B cell (primary cell): ENCODE measurements at regions of chr6 and their contacts with region 1.

Region 1: DNA sequence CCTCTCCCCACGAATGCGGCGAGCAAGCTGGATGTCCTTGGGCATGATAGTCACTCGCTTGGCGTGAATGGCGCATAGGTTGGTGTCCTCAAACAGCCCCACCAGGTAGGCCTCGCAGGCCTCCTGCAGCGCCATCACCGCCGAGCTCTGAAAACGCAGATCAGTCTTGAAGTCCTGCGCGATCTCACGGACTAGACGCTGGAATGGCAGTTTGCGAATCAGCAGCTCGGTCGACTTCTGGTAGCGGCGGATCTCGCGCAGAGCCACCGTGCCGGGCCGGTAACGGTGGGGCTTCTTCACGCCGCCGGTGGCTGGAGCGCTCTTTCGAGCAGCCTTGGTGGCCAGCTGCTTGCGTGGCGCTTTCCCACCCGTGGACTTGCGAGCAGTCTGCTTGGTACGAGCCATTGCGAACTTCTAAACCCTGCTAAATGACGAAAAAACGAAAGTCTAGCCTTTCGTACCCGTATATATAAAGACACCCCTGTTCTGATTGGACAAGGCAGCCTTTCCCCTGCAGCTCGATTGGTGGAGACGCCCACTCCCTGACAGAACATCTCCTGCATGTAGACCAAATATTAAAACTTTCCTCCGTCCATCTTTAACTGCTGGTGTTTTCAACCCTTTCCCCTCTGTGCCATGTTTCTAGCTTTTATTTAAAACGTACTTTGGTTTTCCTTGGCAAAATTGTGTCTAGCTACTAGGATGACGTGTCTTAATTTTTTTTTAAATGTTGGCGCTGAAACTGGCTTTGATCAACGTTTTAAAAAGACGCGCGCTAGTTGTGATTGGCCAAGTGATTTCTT is 109.8 kb downstream of the HFE start:
- DNase-seq: peak; percentile 95
- ATAC-seq: peak; percentile 55
- H3K4me3 ChIP-seq: peak overlapping the region; percentile 78 to 100 (median 90)
- H3K4me3 Mint-ChIP-seq: peak overlapping the region; percentile 91
- H3K27ac ChIP-seq: peak overlapping the region; percentile 78 to 95
- H3K27ac Mint-ChIP-seq: peak overlapping the region; percentile 96
- H3K4me1 ChIP-seq: peaks cover 16 to 31% of the 10 kb centered on the region in 2 donors
- H3K4me1 Mint-ChIP-seq: peaks cover 41% of the 10 kb centered on the region
- H3K27me3 ChIP-seq: no peaks in the 10 kb centered on the region
- H3K27me3 Mint-ChIP-seq: no peaks in the 10 kb centered on the region
- CTCF ChIP-seq: no peak

Region 2: GRCh38 chr6:25962149-25963127 is 234.6 kb before region 1 on chr6 and contains the start of gene TRIM38:
- CTCF ChIA-PET with region 1: no interaction called
- POLR2A ChIA-PET with region 1: no interaction called
- intact Hi-C with region 1: no loop called
- DNase-seq: peak; percentile 95
- ATAC-seq: peak; percentile 84
- H3K4me3 ChIP-seq: peak within 1 kb of the TSS; percentile 83 to 95 (median 92)
- H3K4me3 Mint-ChIP-seq: peak within 1 kb of the TSS; percentile 97
- H3K27ac ChIP-seq: peak within 1 kb of the TSS; percentile 94 to 97
- H3K27ac Mint-ChIP-seq: peak within 1 kb of the TSS; percentile 98
- H3K4me1 ChIP-seq: peaks cover 74 to 75% of the 10 kb centered on the region in 2 donors
- H3K4me1 Mint-ChIP-seq: peaks cover 78% of the 10 kb centered on the region
- H3K27me3 ChIP-seq: no peaks in the 10 kb centered on the region
- H3K27me3 Mint-ChIP-seq: no peaks in the 10 kb centered on the region
- CTCF ChIP-seq: no peak
- total RNA-seq, gene TRIM38: 57.2 and 57.5 TPM in 2 replicates

Region 3: DNA sequence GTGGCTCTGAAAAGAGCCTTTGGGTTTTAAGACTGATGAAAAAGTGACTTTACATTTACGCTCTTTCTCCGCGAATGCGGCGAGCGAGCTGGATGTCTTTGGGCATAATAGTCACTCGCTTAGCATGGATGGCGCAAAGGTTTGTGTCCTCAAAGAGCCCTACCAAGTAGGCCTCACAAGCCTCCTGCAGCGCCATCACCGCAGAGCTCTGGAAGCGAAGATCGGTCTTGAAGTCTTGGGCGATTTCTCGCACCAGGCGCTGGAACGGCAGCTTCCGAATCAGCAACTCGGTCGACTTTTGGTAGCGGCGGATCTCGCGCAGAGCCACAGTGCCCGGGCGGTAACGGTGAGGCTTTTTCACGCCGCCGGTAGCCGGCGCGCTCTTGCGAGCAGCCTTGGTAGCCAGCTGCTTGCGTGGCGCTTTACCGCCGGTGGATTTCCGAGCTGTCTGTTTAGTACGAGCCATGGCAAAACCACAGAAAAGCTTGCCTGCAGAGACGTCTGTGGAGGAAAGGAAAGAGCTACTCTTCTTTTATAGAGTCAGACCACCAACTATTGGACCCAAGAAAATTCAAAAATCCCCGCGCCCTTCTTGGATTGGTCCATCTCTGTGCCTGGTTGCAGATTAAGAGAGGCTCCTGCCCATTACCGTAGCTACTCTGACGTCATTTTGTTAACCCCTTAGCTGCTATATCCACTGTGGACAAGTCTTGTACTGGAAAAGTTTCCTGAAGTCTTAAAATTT is 165.3 kb before region 1 on chr6:
- CTCF ChIA-PET with region 1: interaction called, 7 read pairs
- POLR2A ChIA-PET with region 1: interaction called, 28 read pairs
- intact Hi-C with region 1: loop called (anchors 2 kb)
- DNase-seq: peak; percentile 90
- ATAC-seq: peak; percentile 63
- H3K4me3 ChIP-seq: peak overlapping the region; percentile 67 to 85 (median 69)
- H3K4me3 Mint-ChIP-seq: peak overlapping the region; percentile 96
- H3K27ac ChIP-seq: peak overlapping the region; percentile 76 to 78
- H3K27ac Mint-ChIP-seq: peak overlapping the region; percentile 87
- H3K4me1 ChIP-seq: peaks cover 26 to 36% of the 10 kb centered on the region in 2 donors
- H3K4me1 Mint-ChIP-seq: peaks cover 46% of the 10 kb centered on the region
- H3K27me3 ChIP-seq: no peaks in the 10 kb centered on the region
- H3K27me3 Mint-ChIP-seq: no peaks in the 10 kb centered on the region
- CTCF ChIP-seq: no peak

Region 4: DNA sequence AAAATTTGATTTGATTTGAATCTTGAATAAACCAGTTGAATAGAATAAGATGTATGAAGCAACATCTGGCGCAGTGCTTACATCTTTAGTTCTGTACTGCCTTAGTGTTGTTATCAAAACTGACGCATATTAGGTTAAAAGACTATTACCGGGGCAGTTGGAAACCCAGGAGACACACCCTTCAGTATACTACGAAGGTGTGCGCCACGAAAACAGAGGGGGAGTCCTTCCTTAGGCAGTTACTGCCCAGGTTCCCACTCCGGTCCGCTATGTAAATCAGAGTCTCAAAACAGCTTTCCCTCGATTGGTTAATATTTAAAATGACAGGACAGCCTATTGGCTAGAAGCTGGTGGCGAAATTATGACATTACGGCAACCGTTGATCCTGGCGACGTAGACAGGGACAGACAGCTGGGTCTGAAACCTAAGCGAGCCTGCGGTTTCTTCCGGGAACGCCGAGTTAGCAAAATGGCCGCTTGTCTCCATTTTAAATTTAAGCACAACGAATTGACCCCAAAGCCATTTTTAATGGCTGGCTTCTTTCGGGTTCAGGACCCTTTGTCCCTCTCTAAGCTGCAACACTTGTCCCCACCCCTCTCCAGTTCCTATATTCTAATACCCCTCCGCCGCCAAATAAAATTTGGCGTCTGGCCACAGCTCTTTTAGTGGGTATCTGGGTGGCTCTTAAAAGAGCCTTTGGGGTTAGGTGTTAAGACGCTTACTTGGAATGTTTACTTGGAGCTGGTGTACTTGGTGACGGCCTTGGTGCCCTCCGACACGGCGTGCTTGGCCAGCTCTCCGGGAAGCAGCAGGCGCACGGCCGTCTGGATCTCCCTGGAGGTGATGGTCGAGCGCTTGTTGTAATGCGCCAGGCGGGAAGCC is 74.0 kb before region 1 on chr6:
- CTCF ChIA-PET with region 1: interaction called, 35 read pairs
- POLR2A ChIA-PET with region 1: interaction called, 178 read pairs
- intact Hi-C with region 1: loop called (anchors 1 kb)
- DNase-seq: peak; percentile 97
- ATAC-seq: peak; percentile 59
- H3K4me3 ChIP-seq: peak overlapping the region; percentile 87 to 100 (median 96)
- H3K4me3 Mint-ChIP-seq: peak overlapping the region; percentile 93
- H3K27ac ChIP-seq: peak overlapping the region; percentile 87 to 88
- H3K27ac Mint-ChIP-seq: peak overlapping the region; percentile 97
- H3K4me1 ChIP-seq: peaks cover 19 to 23% of the 10 kb centered on the region in 2 donors
- H3K4me1 Mint-ChIP-seq: peaks cover 26% of the 10 kb centered on the region
- H3K27me3 ChIP-seq: no peaks in the 10 kb centered on the region
- H3K27me3 Mint-ChIP-seq: no peaks in the 10 kb centered on the region
- CTCF ChIP-seq: no peak

Region 5: DNA sequence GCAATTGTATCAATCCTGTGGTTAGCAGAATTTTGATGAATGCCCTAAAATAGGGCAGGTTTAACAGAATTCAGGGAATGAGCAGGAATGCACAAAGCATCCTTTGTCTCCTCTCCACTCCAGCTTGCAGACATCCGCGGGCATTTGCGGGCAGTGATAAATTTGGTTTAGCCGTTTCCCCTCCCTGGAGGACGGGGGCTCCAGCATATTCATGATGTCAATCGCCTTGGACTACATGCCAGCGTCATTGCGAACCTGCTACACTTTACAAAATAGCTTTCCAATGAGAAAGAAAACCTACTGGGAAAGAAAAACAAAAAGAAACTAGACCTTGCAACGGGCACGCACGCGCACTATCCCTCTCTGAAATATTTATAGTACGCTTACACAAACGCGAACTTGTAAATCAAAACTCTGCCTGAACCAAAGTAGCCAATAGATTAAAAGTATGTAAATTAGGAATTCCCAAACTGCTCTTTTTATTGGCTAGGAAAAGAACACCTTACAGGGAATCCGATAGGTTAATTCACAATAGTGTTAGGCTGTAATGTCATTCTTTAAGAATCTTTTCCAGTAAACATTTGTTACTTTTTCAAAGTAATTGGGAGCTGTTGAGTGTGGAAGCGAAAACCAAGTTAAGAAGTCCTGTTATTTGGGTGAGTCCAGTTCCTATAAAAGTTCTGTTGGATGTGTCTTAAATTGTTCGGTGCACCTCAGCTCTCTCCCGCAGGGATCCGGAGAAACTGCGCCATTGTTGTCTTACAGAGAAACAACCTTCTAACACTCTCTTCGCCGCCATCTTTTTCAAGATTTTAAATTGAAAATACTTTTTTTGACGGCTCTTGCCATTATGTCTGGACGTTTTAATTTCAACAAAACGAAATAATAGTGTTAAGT is 26.9 kb after region 1 on chr6:
- CTCF ChIA-PET with region 1: interaction called, 3 read pairs
- POLR2A ChIA-PET with region 1: interaction called, 12 read pairs
- intact Hi-C with region 1: no loop called
- DNase-seq: peak; percentile 81
- ATAC-seq: peak; percentile 87
- H3K4me3 ChIP-seq: peak overlapping the region; percentile 56 to 97 (median 75)
- H3K4me3 Mint-ChIP-seq: no peak overlapping the region
- H3K27ac ChIP-seq: peak overlapping the region; percentile 85 to 95
- H3K27ac Mint-ChIP-seq: no peak overlapping the region
- H3K4me1 ChIP-seq: peaks cover 4 to 14% of the 10 kb centered on the region in 2 donors
- H3K4me1 Mint-ChIP-seq: peaks cover 8% of the 10 kb centered on the region
- H3K27me3 ChIP-seq: no peaks in the 10 kb centered on the region
- H3K27me3 Mint-ChIP-seq: no peaks in the 10 kb centered on the region
- CTCF ChIP-seq: no peak

Region 6: GRCh38 chr6:26285143-26286134 is 88.4 kb after region 1 on chr6:
- CTCF ChIA-PET with region 1: interaction called, 14 read pairs
- POLR2A ChIA-PET with region 1: interaction called, 47 read pairs
- intact Hi-C with region 1: loop called (anchors 1 kb)
- DNase-seq: peak; percentile 99
- ATAC-seq: peak; percentile 76
- H3K4me3 ChIP-seq: peak overlapping the region; percentile 52 to 99 (median 71)
- H3K4me3 Mint-ChIP-seq: peak overlapping the region; percentile 90
- H3K27ac ChIP-seq: peak overlapping the region; percentile 93 to 97
- H3K27ac Mint-ChIP-seq: peak overlapping the region; percentile 95
- H3K4me1 ChIP-seq: peaks cover 17 to 18% of the 10 kb centered on the region in 2 donors
- H3K4me1 Mint-ChIP-seq: peaks cover 33% of the 10 kb centered on the region
- H3K27me3 ChIP-seq: no peaks in the 10 kb centered on the region
- H3K27me3 Mint-ChIP-seq: peaks cover 3% of the 10 kb centered on the region
- CTCF ChIP-seq: no peak

Region 7: GRCh38 chr6:26301638-26302037 is 104.6 kb after region 1 on chr6:
- CTCF ChIA-PET with region 1: no interaction called
- POLR2A ChIA-PET with region 1: no interaction called
- intact Hi-C with region 1: no loop called
- DNase-seq: no peak
- ATAC-seq: no peak
- H3K4me3 ChIP-seq: no peak overlapping the region
- H3K4me3 Mint-ChIP-seq: no peak overlapping the region
- H3K27ac ChIP-seq: no peak overlapping the region
- H3K27ac Mint-ChIP-seq: no peak overlapping the region
- H3K4me1 ChIP-seq: peaks cover 5 to 9% of the 10 kb centered on the region in 2 donors
- H3K4me1 Mint-ChIP-seq: peaks cover 10% of the 10 kb centered on the region
- H3K27me3 ChIP-seq: peaks cover 0 to 2% (median 0%) of the 10 kb centered on the region in 4 experiments
- H3K27me3 Mint-ChIP-seq: peaks cover 3% of the 10 kb centered on the region
- CTCF ChIP-seq: no peak

Region 8: GRCh38 chr6:27146706-27147505 is 949.9 kb after region 1 on chr6:
- CTCF ChIA-PET with region 1: interaction called, 4 read pairs
- POLR2A ChIA-PET with region 1: interaction called, 18 read pairs
- intact Hi-C with region 1: loop called (anchors 2 kb)
- DNase-seq: peak; percentile 98
- ATAC-seq: peak; percentile 85
- H3K4me3 ChIP-seq: peak overlapping the region; percentile 72 to 100 (median 88)
- H3K4me3 Mint-ChIP-seq: no peak overlapping the region
- H3K27ac ChIP-seq: peak overlapping the region; percentile 76 to 92
- H3K27ac Mint-ChIP-seq: no peak overlapping the region
- H3K4me1 ChIP-seq: peaks cover 20 to 26% of the 10 kb centered on the region in 2 donors
- H3K4me1 Mint-ChIP-seq: peaks cover 17% of the 10 kb centered on the region
- H3K27me3 ChIP-seq: no peaks in the 10 kb centered on the region
- H3K27me3 Mint-ChIP-seq: no peaks in the 10 kb centered on the region
- CTCF ChIP-seq: no peak